Dorsolateral prefrontal cortex (tissue), 120 donors: ENCODE measurements at regions of chr11 and their contacts with region 1.

Region 1: DNA sequence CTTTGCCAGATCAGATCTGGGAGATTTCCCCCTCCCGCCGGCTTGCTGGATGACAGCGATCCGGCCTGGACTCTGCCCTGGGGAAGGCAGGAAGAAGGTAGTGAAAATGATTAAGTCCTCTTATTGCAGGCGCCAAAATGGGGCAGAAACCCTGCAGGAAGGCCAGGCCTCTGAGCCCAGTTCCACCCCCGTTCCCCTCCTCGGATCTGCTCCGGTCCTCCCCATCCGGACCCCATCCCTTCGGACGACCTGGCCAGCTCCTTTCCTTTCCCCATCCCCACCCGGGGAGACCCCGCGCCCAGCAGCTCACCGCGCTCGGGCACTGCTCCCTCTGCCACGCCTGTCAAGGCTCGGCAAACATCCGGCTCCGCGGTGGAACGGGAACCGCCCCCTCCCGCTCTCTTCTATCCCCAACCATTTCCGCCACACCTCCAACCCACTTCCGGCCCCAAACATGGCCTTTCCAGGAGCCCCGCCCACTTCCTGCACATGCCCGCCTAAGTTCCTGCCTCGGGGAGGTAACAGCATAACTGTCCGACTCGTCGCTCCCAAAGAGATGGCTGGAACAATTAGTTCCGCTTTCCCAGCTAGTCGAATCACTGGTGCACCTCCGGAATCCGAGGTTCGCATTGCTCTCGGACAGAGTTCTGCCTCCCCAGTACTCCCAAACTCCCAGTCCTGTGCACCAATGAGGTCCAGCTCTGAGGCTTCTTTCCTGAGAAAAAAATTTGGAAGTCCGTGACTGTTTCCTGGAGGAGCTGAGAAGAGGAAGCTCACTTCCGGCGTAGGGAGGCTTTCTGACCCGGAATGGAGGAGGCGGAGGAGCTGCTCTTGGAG is at the starts of genes ARHGAP1 and ZNF408:
- DNase-seq: peak; percentile 96 to 99 (median 99)
- H3K4me3 ChIP-seq: peak within 1 kb of the TSS; percentile 67 to 100 (median 97)
- H3K27ac ChIP-seq: peak within 1 kb of the TSS; percentile 77 to 99 (median 96)
- H3K27me3 ChIP-seq: no peaks in the 10 kb centered on the region
- CTCF ChIP-seq: peak in 19 of 56 donors; percentile 10 to 49 (median 21)
- total RNA-seq, gene ARHGAP1: 52.6 to 143 (median 80.0) TPM
- total RNA-seq, gene ZNF408: 4.8 to 15.1 (median 8.4) TPM

Region 2: DNA sequence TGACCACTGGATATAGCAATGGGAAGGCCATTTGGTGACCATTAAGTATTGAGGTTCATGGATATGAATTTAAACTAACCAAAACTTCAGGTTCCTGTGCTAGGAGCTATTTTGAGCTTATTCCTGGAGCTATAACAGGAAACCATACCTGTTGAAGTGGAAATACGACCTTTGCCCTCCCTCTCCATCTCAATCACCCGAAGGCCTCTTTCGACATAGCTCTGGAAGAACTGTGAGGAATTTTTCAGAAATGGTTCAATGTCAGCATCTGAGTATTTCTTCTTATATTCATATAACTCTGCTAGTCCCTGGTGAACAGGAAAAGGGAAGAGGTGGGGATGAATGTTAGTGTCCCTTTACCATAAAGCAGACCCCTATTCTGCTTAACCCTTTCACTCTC is 49.7 kb after region 1 on chr11:
- intact Hi-C with region 1: loop called in 1 of 2 experiments (anchors 5 kb)
- DNase-seq: no peak
- H3K4me3 ChIP-seq: no peak overlapping the region
- H3K27ac ChIP-seq: no peak overlapping the region
- H3K27me3 ChIP-seq: no peaks in the 10 kb centered on the region
- CTCF ChIP-seq: no peak

Region 3: GRCh38 chr11:46760429-46761128 is 60.1 kb after region 1 on chr11:
- intact Hi-C with region 1: no loop called
- DNase-seq: no peak
- H3K4me3 ChIP-seq: no peak overlapping the region
- H3K27ac ChIP-seq: peak overlapping the region in 32 of 59 donors; percentile 11 to 77 (median 44)
- H3K27me3 ChIP-seq: no peaks in the 10 kb centered on the region
- CTCF ChIP-seq: no peak

Region 4: GRCh38 chr11:46930089-46930488 is 229.6 kb after region 1 on chr11:
- intact Hi-C with region 1: no loop called
- DNase-seq: no peak
- H3K4me3 ChIP-seq: no peak overlapping the region
- H3K27ac ChIP-seq: no peak overlapping the region
- H3K27me3 ChIP-seq: no peaks in the 10 kb centered on the region
- CTCF ChIP-seq: no peak

Region 5: GRCh38 chr11:47060807-47061206 is 360.3 kb after region 1 on chr11:
- intact Hi-C with region 1: no loop called
- DNase-seq: no peak
- H3K4me3 ChIP-seq: no peak overlapping the region
- H3K27ac ChIP-seq: peak overlapping the region in 18 of 59 donors; percentile 5 to 65 (median 28)
- H3K27me3 ChIP-seq: no peaks in the 10 kb centered on the region
- CTCF ChIP-seq: no peak

Region 6: DNA sequence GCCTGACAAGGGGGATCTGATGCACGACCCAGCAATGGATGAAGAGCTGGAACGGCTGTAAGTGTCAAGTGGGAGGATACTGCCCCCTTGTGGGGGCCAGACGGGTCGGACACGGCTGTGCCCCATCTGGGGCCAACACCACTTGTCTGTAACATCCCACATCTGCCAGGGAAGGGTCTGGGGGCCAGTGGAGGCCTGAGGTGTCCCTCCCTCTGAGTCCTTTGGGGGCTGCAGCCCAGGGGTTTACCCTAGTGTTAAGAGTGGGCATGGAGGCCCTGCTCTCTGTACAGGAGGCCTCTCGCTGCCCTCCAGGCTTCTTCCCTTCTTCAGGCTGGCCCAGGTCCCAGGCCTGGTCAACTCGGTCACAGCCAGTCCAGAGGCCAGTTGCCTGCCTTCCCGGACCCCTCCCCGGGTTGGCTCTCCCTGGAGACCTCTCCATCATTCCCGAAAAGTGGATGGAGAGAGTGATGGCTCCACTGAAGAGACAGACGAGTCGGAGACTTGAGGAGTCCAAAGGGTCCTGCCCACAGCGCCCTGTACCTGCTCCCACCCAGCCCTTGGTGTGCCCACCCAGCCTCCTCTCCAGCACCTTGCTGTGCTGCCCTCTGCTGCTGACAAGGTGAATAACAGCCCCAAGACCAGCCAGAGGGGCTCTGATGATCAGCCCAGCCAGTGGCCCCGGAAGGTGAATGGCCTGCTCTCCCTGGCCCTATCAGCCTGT is 460.8 kb after region 1 on chr11:
- intact Hi-C with region 1: loop called in 1 of 2 experiments (anchors 10 kb)
- DNase-seq: peak in 8 of 10 donors; percentile 55 to 77 (median 68)
- H3K4me3 ChIP-seq: no peak overlapping the region
- H3K27ac ChIP-seq: peak overlapping the region in 49 of 59 donors; percentile 5 to 89 (median 53)
- H3K27me3 ChIP-seq: no peaks in the 10 kb centered on the region
- CTCF ChIP-seq: peak; percentile 45 to 79 (median 69)

Region 7: GRCh38 chr11:47204637-47204989 is 504.2 kb after region 1 on chr11:
- intact Hi-C with region 1: no loop called
- DNase-seq: peak in 1 of 10 donors; percentile 36
- H3K4me3 ChIP-seq: no peak overlapping the region
- H3K27ac ChIP-seq: peak overlapping the region in 41 of 59 donors; percentile 1 to 86 (median 58)
- H3K27me3 ChIP-seq: no peaks in the 10 kb centered on the region
- CTCF ChIP-seq: no peak